Astrocyte of the cerebellum (primary cell): ENCODE measurements at regions of chr9 and their contacts with region 1.

Region 1: DNA sequence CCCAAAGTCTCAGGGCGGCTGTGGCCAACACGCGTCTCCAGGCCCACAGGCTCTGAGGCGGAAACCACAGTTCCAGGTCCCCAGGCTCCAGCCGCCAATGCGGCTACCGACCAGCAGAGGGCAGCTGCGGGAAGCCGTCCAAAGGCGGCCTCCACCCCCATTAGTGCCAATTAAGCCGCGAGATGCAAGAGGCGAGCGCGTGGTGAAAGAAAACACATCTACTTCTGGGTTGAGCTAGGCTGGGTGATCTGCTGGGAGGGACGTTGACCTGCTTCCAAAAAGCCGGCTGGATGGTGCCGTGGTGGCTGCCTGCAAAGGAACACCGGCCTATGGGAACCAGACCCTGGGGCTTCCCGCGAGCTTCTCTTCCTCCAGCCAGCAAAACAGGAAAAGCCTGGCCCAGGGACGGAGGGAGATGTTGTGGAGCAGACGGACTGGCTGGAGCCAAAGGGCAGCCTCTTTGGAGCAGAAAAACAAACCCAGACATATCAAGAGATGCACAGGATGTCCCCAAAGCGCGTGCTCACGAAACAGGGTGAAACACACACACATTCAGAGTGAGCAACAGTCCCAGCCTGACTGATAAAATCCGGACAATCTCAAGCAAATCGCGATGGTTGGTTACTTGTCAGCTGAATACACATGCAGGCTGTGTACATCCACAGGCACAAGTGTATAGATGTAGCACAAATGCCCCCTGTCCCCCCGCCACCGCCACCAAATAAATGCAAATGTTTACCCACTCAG is 187.1 kb upstream of the BRINP1 start:
- DNase-seq: peak; percentile 22
- H3K4me3 ChIP-seq: peak overlapping the region; percentile 33
- CTCF ChIP-seq: peak; percentile 98

Region 2: GRCh38 chr9:120336021-120336752 is 779.9 kb after region 1 on chr9:
- in situ Hi-C with region 1: loop called (anchors 10 kb)
- DNase-seq: no peak
- H3K4me3 ChIP-seq: no peak overlapping the region
- CTCF ChIP-seq: no peak

Region 3: DNA sequence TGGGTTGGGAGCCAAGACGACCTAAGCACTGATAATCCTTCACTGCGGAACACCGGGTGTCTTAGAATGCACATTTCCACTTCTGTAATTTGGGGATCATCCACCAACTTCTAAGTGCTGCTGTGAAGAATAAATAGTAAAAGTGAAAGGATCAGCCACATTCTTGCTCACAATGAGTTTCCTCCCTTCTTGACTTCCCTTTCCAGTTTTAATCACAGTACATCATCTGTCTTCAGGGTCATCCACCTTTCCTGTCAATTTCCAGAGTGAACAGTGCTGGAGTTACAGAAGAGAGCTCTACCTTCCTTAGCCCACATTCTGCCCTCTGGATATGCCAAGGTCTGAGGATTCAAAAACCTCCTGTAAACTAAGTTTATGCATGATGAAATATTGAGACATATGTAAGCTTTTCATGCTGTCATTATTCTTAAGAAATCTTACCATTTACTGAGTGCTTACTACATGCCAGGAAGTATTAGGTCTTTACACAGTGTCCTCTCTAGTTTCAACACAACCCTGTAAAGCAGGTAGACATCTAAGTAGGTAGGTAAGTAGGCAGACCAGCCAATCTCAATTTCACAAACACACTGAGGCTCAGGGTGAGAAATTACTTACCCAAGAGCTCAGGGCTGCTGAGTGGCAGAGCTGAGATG is 918.4 kb after region 1 on chr9:
- in situ Hi-C with region 1: loop called (anchors 25 kb)
- DNase-seq: no peak
- H3K4me3 ChIP-seq: no peak overlapping the region
- CTCF ChIP-seq: no peak

Region 4: GRCh38 chr9:120531683-120532300 is 975.5 kb after region 1 on chr9:
- in situ Hi-C with region 1: loop called (anchors 25 kb)
- DNase-seq: peak; percentile 19
- H3K4me3 ChIP-seq: no peak overlapping the region
- CTCF ChIP-seq: peak; percentile 66